ENCODE measurements at regions of chr10 and their contacts with region 1.

Region 1: GRCh38 chr10:123994417-123995081 is 98.8 kb downstream of the CHST15 start:
- DNase-seq: peak; percentile 76
- H3K4me3 ChIP-seq: no peak overlapping the region
- H3K27ac ChIP-seq: no peak overlapping the region
- H3K4me1 ChIP-seq: no peaks in the 10 kb centered on the region
- H3K27me3 ChIP-seq: peaks cover 19 to 24% of the 10 kb centered on the region in 2 experiments
- CTCF ChIP-seq: peak; percentile 92 to 96
- POLR2A ChIP-seq: no peak

Region 2: DNA sequence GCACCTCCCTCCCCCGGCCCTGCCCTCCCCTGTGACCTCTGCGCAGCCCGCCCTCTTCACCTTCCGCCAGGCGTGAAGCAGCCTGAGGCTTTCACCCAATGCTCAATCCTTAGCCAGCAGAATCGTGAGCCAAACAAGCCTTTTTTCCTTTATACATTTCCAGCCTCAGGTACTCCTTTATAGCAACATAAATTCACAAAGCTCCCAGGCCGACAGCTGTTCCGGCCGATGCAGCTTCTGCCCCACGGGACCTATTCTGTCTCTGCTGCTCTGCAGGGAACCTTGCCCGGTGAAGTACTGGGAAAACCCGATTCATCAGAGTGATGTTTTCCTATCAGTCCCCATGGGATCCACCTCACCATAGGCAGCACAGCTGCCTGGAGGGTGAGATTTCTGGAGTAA is 11.4 kb after region 1 on chr10:
- CTCF ChIA-PET with region 1: interaction called, 18 read pairs
- POLR2A ChIA-PET with region 1: no interaction called
- dilution Hi-C with region 1: no loop called
- intact Hi-C with region 1: no loop called
- DNase-seq: no peak
- H3K4me3 ChIP-seq: no peak overlapping the region
- H3K27ac ChIP-seq: no peak overlapping the region
- H3K4me1 ChIP-seq: no peaks in the 10 kb centered on the region
- H3K27me3 ChIP-seq: no peaks in the 10 kb centered on the region
- CTCF ChIP-seq: no peak
- POLR2A ChIP-seq: no peak

Region 3: DNA sequence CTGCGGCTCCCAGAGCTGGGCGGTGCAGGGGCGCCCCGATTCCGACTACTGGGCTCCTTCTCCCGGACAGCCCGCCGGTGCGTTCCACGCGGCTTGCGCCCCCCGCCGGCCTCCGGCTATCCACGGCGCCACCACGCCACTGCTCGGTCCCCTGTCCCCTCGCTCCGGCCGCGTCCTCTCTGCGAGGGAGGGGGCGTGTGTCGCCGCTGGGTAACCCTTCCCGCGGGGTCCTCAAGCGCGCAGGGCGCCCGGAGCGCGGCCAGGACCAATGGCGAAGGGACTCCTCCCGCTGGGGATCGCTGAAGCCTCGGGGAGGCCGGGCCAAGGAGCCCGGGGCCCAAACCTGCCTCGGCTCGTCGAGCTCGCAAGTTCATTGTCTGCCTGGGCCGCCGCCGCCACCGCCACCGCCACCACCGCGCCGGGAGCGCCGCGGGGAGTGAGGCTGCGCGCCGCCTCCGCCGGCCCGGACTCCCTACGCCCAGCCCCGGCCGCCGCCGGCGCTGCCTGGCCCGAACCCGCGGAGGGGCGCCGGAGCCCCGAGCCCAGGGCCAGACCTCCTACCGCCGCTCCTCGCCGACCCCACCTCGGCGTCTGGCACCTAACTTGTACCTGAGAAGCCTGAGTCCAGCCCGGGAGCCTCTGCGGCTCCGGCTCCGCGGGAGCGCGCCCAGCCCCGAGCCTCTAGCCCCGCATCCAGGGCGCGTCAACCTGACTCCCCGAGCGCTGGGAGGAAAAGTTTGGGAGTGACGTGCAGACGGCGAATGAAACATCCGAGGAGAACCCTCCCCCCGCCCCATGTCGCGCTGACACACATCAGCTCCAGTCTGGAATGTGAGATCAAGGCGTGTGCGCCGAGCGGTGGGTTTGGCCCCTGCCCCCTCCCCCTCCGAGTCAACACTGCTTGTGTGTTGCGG is 98.6 kb after region 1 on chr10 and contains the start of gene CHST15:
- CTCF ChIA-PET with region 1: interaction called, 9 read pairs
- POLR2A ChIA-PET with region 1: no interaction called
- dilution Hi-C with region 1: no loop called
- intact Hi-C with region 1: loop called (anchors 1 kb)
- DNase-seq: peak; percentile 63
- H3K4me3 ChIP-seq: peak within 1 kb of the TSS; percentile 21 to 75 (median 25)
- H3K27ac ChIP-seq: no peak within 1 kb of the TSS
- H3K4me1 ChIP-seq: peaks cover 6% of the 10 kb centered on the region
- H3K27me3 ChIP-seq: peaks cover 4 to 47% of the 10 kb centered on the region in 2 experiments
- CTCF ChIP-seq: peak in 1 of 2 donors; percentile 29
- POLR2A ChIP-seq: no peak
- total RNA-seq, gene CHST15: 23.1 and 29.2 TPM in 2 replicates

Region 4: DNA sequence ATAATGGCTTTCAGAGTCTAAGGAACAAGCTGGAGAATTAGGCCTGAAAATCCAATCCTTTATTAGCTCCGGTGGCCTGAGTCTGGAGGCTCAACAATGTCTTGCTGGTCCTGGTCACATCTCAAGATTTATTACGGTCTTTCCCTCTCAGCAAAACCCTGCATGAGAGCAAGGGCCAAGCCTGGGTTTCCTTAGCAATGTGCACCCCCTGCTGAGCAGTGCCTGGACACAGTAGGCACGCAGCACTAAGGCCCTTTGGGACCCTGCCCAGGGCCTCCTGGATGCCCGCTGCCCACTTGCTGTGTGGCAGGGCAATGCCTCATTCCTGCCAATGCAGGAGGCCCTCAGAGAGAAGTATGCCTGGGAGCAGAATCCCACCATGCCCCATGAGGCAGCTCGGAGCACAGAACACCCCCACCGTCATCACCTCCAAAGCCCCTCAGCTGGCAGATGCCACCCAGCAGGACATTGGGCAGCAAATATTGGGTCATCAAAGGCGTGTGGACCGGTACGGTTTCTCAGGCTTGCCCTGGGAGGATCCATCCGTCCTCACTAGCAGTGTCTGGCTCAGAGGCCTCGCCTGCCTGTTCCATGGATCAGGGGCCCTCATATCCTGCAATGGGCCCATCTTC is 267.8 kb after region 1 on chr10:
- CTCF ChIA-PET with region 1: interaction called, 13 read pairs
- POLR2A ChIA-PET with region 1: no interaction called
- dilution Hi-C with region 1: no loop called
- intact Hi-C with region 1: loop called (anchors 1 kb)
- DNase-seq: peak; percentile 11
- H3K4me3 ChIP-seq: no peak overlapping the region
- H3K27ac ChIP-seq: no peak overlapping the region
- H3K4me1 ChIP-seq: no peaks in the 10 kb centered on the region
- H3K27me3 ChIP-seq: no peaks in the 10 kb centered on the region
- CTCF ChIP-seq: peak in 1 of 2 donors; percentile 4
- POLR2A ChIP-seq: no peak

Region 5: DNA sequence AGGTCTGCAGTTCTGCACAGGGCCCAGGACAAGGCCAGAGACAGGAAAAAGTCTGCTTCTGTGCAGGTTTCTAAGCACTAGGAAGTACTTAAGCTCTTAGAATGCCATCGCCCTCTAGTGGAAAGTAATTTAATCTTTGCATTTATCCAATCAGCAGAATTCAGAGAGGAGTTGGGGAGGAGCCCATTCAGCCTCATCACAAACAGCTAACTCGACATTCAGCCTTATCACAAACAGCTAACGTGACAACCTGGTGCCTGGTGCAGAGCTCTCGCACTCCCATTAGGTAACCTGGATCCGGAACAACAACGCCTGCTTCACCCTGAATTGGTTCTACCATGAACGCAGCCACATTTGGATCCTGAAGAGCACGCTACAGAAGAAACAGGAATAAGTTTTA is 409.0 kb after region 1 on chr10:
- CTCF ChIA-PET with region 1: interaction called, 80 read pairs
- POLR2A ChIA-PET with region 1: no interaction called
- dilution Hi-C with region 1: no loop called
- intact Hi-C with region 1: loop called (anchors 1 kb)
- DNase-seq: peak; percentile 85
- H3K4me3 ChIP-seq: no peak overlapping the region
- H3K27ac ChIP-seq: no peak overlapping the region
- H3K4me1 ChIP-seq: no peaks in the 10 kb centered on the region
- H3K27me3 ChIP-seq: no peaks in the 10 kb centered on the region
- CTCF ChIP-seq: peak; percentile 60 to 64
- POLR2A ChIP-seq: no peak

Measured in endothelial cell of umbilical vein (primary cell).